Mammary epithelial cell (primary cell): ENCODE measurements at regions of chr19 and their contacts with region 1.

Region 1: DNA sequence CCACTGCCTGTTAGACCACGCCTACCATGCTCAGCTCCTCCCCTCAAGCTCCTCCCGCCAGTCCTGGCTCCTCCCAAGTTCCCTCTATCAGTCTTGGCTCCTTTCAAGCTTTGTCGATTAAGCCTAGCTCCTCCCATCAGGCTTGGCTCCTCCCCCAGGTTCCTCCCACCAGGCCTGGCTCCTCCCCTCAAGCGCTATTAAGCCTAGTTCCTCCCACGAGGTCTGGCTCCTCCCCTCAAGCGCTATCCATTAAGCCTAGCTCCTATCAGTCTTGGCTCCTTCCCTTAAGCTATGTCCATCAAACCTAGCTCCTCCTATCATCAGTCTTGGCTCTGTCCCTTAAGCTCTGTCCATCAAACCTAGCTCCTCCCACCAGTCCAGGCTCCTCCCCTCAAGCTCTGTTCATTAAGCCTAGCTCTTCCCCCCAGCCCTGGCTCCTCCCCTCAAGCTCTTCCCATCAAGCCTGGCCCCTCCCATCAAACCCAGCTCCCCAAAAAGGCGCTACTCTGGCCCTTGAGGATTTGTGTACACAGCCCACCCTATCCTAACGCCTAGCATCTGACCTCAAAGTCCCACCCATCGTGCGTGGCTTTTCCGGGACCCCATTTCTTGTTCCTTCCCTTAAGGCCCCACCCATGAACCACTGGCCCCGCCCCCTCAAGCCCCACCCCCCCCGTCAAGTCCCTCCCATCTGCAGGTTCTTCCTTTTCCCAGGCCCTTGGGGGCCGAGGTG is 10.0 kb downstream of the CAMSAP3 start:
- DNase-seq: peak; percentile 16
- H3K4me3 ChIP-seq: no peak overlapping the region
- H3K27ac ChIP-seq: no peak overlapping the region
- H3K4me1 ChIP-seq: no peaks in the 10 kb centered on the region
- H3K27me3 ChIP-seq: no peaks in the 10 kb centered on the region
- CTCF ChIP-seq: no peak

Region 2: GRCh38 chr19:7442423-7442822 is 163.2 kb before region 1 on chr19:
- CTCF ChIA-PET with region 1: interaction called, 15 read pairs
- dilution Hi-C with region 1: no loop called
- in situ Hi-C with region 1: no loop called
- intact Hi-C with region 1: no loop called
- DNase-seq: no peak
- H3K4me3 ChIP-seq: no peak overlapping the region
- H3K27ac ChIP-seq: no peak overlapping the region
- H3K4me1 ChIP-seq: no peaks in the 10 kb centered on the region
- H3K27me3 ChIP-seq: no peaks in the 10 kb centered on the region
- CTCF ChIP-seq: no peak

Region 3: DNA sequence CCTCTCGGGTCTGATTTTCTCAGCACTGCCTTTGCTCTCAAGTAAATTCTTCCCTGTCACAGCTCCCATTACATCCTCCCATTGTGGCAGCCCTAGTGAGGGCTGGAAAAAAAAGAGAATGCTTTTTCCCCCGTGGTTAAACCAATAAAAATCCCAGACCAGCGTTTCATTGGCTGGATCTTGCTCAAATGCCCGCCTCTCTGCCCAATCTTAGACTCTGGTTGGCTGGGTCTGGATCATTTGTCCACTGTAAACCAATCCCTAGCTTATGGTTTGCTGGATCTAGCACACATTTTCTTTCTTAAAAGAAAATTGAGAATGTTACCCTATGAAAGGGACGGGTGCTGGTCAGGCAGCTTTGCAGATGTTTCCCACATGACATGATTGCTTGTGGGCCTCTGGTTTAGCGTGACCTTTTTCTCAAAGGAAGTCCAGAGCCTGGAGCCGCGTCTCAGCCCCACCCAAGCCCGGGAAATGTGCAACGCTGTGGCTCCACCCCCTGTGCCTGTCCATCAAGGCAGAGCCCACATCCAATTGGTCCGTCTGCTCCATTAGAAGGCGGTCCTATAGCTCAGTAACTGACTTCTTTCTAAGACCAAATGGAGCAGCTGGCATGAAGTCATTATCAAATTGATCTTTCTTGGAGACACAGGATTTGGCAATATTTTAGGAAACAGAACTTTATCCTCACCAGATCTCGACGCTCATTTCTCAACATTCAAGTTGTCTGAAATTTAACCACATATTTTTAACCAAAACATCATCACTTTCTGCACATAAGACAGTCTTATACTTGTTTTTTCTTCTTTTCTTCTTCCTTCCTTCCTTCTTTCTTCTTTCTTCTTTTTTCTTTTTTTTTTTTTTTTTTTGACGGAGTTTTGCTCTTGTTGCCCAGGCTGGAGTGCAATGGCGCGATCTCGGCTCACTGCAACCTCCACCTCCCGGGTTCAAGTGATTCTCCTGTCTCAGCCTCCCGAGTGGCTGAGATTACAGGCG is 68.7 kb after region 1 on chr19:
- CTCF ChIA-PET with region 1: no interaction called
- dilution Hi-C with region 1: loop called (anchors 5 kb)
- in situ Hi-C with region 1: no loop called
- intact Hi-C with region 1: no loop called
- DNase-seq: peak; percentile 41
- H3K4me3 ChIP-seq: no peak overlapping the region
- H3K27ac ChIP-seq: no peak overlapping the region
- H3K4me1 ChIP-seq: no peaks in the 10 kb centered on the region
- H3K27me3 ChIP-seq: peaks cover 3% of the 10 kb centered on the region
- CTCF ChIP-seq: no peak